AG04449 (cell line): ENCODE measurements at regions of chr3 and their contacts with region 1.

Region 1: DNA sequence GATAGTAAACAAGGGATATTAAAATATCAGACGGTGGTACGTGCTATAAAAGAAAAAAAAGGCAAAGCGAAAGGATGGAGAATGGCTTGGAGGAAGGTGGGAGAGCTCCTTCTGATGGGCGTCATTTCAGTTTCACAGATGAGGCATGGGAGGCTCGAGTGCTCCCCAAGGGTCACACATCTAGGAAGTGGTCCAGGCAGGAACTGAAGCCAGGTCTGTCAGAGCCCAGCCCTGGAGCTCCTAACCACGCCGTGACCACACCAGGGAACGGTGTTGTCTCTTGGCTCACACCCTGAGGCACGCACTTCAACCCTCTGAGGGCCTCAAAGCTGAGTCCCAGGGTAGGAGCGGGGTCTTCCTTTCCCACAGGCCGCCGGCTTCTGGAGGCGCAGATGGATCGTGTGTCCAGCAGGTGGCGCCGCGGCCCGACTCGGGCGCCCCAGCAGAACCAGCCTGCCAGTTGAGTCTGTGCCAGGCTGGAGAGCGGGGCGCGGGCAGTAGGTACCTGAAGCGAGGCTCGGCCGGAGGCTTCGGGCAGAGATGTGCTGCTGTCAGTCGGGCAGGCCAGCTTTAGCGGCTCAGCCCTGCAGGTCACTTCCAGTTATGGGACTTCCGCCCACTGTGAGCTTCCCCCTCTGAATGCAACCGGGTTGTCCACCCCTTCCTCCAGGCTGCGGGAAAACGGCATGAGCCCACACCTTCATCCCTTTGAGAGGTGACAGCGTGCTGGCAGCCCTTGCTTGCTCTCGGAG is 68.1 kb downstream of the SLC6A1 start:
- DNase-seq: no peak
- H3K4me3 ChIP-seq: peak overlapping the region; percentile 27; the same call in 1 of the 2 replicates
- CTCF ChIP-seq: peak; percentile 91

Region 2: DNA sequence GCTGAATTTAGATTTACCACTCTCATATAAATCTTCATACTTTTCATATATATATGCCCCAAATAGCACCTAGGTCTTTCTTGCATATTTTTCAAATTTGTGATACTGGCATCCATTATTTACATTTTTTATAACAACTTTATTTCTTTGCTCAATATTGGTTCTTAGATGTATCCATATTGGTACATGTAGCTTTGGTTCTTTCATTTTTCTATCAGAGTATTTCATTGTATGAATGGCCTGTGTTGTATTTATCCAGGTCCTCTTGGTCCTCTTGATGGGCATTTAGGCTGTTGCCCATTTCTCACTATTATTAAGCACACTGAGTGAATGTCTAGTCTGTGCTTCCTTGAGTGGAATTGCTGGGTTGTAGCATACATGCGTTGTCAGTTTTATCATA is 236.2 kb before region 1 on chr3:
- CTCF ChIA-PET with region 1: no interaction called
- POLR2A ChIA-PET with region 1: no interaction called
- DNase-seq: no peak
- H3K4me3 ChIP-seq: no peak overlapping the region
- CTCF ChIP-seq: no peak

Region 3: DNA sequence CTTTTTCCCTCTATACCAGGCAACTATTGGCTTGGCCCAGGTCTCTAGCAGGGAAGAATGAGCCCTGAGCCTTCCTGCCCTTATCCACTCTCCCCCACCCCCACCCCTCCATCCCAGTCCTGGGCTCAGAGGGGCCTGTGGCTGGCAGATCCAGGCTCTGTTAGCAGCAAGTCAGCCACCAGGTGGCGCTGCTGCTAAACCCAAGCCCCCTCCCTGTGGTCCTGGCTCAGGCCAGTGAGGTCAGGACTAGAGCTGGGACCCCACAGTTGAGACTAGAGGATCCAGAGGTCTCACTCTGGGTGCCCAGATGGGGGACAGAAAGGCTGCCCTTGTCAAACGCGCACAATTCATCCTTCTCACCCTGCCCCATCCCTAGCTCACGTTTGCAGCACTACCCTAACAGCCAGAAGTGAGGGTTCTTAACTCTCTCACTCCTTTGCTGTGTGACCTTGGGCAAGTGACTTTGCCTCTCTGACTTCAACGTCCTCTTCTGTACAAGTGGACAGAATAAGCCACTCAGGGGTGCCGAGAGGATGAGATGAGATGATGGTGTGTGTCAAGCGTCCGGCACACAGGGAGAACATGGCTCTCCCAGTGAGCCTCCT is 114.9 kb before region 1 on chr3:
- CTCF ChIA-PET with region 1: interaction called, 290 read pairs
- POLR2A ChIA-PET with region 1: interaction called, 3 read pairs
- DNase-seq: no peak
- H3K4me3 ChIP-seq: no peak overlapping the region
- CTCF ChIP-seq: peak; percentile 85

Region 4: DNA sequence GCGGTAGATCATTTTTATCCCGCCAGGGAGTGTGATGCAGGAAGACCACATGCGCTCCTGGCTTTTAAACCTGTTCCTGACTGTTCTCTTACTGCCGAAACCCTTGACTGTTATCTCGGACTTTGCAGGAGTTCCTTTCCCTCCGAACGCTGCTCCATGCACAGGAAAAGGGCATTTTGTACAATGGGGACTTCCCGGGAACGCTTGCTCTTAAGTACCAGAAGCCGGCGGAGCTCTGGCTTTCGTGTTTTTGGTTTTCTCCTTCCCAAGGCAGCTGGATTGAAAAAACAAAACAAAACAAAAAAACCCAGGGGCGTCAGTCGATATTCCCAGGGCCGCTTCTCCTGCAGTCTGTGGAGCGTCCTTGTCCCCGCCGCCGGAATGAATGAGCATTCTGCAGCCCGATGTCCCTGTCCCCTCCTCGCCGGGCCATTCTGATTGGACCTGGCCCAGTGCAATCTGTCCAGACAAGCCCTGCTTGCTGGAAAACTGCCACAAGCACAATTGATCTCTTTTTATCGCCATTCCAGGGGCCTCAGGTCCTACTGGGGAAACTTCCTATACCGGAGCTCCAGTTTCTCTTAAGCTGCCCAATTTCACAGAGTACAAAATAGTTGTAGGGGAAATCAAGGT is 23.3 kb before region 1 on chr3:
- CTCF ChIA-PET with region 1: interaction called, 13 read pairs
- POLR2A ChIA-PET with region 1: no interaction called
- DNase-seq: no peak
- H3K4me3 ChIP-seq: no peak overlapping the region
- CTCF ChIP-seq: no peak

Region 5: DNA sequence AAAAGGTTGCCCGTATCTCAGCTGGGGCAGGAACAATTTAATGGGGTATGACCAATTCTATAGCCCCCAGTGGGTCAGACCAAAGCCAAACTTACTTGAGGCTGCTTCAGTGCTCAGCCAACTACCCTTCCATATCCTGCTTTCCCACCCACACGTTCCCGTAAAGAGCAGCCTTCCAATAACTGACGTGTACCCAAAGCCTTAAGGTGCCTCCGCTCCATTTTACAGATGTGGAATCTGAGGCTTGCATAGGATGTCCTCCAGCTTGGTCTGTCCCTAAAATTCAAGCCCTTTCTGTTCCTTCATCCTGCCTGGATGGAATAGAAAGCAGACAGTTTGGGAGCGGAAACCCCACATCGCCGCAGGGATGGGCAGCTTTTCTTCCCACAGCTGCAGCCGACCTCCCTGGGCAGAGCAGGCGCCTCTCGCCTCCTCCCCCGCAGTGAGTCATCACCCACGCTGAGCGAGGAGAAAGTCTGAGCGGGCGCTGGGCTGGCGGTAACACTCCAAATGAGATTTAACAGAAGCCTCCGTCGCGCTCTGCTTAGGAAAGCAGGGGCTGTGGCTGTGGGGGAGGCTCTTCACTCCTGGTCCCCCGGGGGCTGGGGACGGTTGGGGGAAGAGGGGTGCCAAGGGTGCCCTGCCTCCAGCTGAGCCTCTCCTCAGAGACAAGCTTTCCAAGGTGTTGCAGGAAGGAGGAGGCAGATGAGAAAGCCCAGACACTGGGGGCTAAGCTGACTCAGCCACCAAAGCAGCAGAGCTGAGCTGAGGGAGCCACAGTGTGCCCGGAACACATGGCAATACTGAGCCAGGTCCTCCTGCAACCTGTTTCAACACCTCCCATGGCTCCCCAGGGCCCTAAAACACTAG is 35.8 kb after region 1 on chr3:
- CTCF ChIA-PET with region 1: interaction called, 26 read pairs
- POLR2A ChIA-PET with region 1: no interaction called
- DNase-seq: peak; percentile 61
- H3K4me3 ChIP-seq: peak overlapping the region; percentile 54
- CTCF ChIP-seq: no peak

Region 6: GRCh38 chr3:11155341-11156025 is 94.8 kb after region 1 on chr3:
- CTCF ChIA-PET with region 1: interaction called, 68 read pairs
- POLR2A ChIA-PET with region 1: no interaction called
- DNase-seq: no peak
- H3K4me3 ChIP-seq: peak overlapping the region; percentile 80
- CTCF ChIP-seq: peak; percentile 97

Region 7: GRCh38 chr3:11236595-11237461 is 176.2 kb after region 1 on chr3:
- CTCF ChIA-PET with region 1: interaction called, 12 read pairs
- POLR2A ChIA-PET with region 1: no interaction called
- DNase-seq: no peak
- H3K4me3 ChIP-seq: no peak overlapping the region
- CTCF ChIP-seq: peak; percentile 52